H1 (cell line): ENCODE measurements at regions of chr19 and their contacts with region 1.

Region 1: GRCh38 chr19:36850559-36851442 is at the start of gene ZNF345:
- DNase-seq: peak in 1 of 2 experiments; percentile 86
- H3K4me3 ChIP-seq: peak within 1 kb of the TSS; percentile 89 to 99 (median 96)
- H3K27ac ChIP-seq: peak within 1 kb of the TSS; percentile 85
- H3K4me1 ChIP-seq: peaks cover 0 to 2% (median 0%) of the 10 kb centered on the region in 4 experiments; a peak in 3 of 7 replicates
- H3K27me3 ChIP-seq: no peaks in the 10 kb centered on the region
- CTCF ChIP-seq: no peak
- EP300 ChIP-seq: no peak
- POLR2A ChIP-seq: peak; percentile 64 to 85; a peak in 2 of 3 replicates
- RAD21 ChIP-seq: no peak
- total RNA-seq, gene ZNF345: 5.1 TPM in 2 replicates

Region 2: DNA sequence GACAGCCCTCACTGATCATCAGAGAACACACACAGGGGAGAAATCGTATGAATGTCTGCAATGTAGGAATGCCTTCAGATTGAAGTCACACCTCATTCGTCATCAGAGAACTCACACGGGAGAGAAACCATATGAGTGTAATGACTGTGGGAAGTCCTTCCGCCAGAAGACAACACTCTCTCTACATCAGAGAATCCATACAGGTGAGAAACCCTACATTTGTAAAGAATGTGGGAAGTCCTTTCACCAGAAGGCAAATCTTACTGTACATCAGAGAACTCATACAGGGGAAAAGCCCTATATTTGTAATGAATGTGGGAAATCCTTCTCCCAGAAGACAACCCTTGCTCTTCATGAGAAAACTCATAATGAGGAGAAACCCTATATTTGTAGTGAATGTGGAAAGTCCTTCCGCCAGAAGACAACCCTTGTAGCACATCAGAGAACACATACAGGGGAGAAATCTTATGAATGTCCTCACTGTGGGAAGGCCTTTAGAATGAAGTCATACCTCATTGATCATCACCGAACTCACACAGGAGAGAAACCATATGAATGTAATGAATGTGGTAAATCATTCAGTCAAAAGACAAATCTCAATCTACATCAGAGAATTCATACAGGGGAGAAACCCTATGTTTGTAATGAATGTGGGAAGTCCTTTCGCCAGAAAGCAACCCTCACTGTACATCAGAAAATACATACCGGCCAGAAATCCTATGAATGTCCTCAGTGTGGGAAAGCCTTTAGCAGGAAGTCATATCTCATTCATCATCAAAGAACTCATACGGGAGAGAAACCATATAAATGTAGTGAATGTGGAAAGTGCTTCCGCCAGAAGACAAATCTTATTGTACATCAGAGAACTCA is 130.9 kb before region 1 on chr19:
- CTCF ChIA-PET with region 1: no interaction called
- POLR2A ChIA-PET with region 1: no interaction called
- DNase-seq: no peak
- H3K4me3 ChIP-seq: peak overlapping the region in 2 of 4 experiments; percentile 3 to 15; a peak in 2 of 8 replicates
- H3K27ac ChIP-seq: no peak overlapping the region
- H3K4me1 ChIP-seq: no peaks in the 10 kb centered on the region
- H3K27me3 ChIP-seq: no peaks in the 10 kb centered on the region
- CTCF ChIP-seq: no peak
- EP300 ChIP-seq: no peak
- POLR2A ChIP-seq: no peak
- RAD21 ChIP-seq: no peak

Region 3: GRCh38 chr19:36796076-36796992 is 54.5 kb before region 1 on chr19:
- CTCF ChIA-PET with region 1: interaction called, 3 read pairs
- POLR2A ChIA-PET with region 1: interaction called, 14 read pairs
- DNase-seq: no peak
- H3K4me3 ChIP-seq: peak overlapping the region; percentile 40 to 99 (median 68); a peak in 7 of 8 replicates
- H3K27ac ChIP-seq: peak overlapping the region; percentile 80
- H3K4me1 ChIP-seq: no peaks in the 10 kb centered on the region
- H3K27me3 ChIP-seq: no peaks in the 10 kb centered on the region
- CTCF ChIP-seq: no peak
- EP300 ChIP-seq: no peak
- POLR2A ChIP-seq: no peak
- RAD21 ChIP-seq: no peak

Region 4: GRCh38 chr19:36837906-36838783 is 12.7 kb before region 1 on chr19 and contains the start of gene ZNF790:
- CTCF ChIA-PET with region 1: interaction called, 14 read pairs
- POLR2A ChIA-PET with region 1: interaction called, 103 read pairs
- DNase-seq: peak in 1 of 2 experiments; percentile 86
- H3K4me3 ChIP-seq: peak within 1 kb of the TSS; percentile 77 to 98 (median 93)
- H3K27ac ChIP-seq: peak within 1 kb of the TSS; percentile 88; the same call in 1 of the 2 replicates
- H3K4me1 ChIP-seq: peaks cover 0 to 2% (median 0%) of the 10 kb centered on the region in 4 experiments; a peak in 1 of 7 replicates
- H3K27me3 ChIP-seq: peaks cover 0 to 1% (median 0%) of the 10 kb centered on the region in 4 experiments; a peak in 1 of 7 replicates
- CTCF ChIP-seq: no peak
- EP300 ChIP-seq: no peak
- POLR2A ChIP-seq: peak; percentile 53 to 59
- RAD21 ChIP-seq: no peak
- total RNA-seq, gene ZNF790: 7.2 and 7.5 TPM in 2 replicates